IMR-90 (cell line): ENCODE measurements at regions of chr10 and their contacts with region 1.

Region 1: DNA sequence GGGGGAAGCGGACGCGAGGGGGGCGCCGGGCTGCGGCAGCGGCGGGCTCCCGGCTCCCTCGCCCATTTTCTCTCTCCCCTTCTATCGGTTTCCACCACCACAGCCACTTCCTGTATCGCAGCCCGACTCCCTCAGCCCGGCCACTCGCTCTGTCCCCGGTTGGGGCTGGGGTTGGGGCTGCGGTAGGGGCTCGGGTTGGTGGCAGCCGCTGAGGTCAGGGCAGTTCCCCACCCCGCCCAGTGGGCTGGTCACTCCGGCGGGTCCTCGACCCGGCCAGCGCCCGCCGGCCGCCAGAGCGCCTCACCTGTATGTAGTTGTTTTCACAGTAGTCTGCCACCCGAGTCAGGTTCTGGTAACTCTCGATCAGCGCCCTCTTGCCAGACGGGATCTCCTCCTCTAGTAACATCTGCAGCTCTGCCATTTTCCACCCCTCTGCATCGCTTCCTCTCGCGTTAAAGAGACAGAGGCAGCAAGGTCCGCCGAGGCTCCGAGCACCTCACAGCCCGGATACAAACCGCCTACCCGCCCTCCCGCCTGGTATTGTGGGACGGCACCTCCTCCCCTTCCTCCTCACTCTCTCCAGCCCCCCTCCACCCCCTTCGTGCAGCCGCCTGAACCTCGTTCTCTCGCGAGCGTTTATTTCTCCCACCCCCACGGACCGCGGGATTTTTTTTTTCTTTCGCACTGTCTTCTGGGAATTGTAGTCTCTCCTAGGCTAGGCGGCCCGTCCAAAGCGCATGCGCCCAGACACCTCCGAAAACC is at the start of gene ABI1:
- DNase-seq: peak; percentile 98
- ATAC-seq: peak; percentile 92
- H3K4me3 ChIP-seq: peak within 1 kb of the TSS; percentile 86
- H3K27ac ChIP-seq: peak within 1 kb of the TSS; percentile 83
- H3K4me1 ChIP-seq: 0 out of 2 replicates have a peak, but pooled peaks cover 2% of the 10 kb centered on the region
- H3K27me3 ChIP-seq: peaks cover 5% of the 10 kb centered on the region
- CTCF ChIP-seq: no peak
- POLR2A ChIP-seq: peak; percentile 86
- RAD21 ChIP-seq: no peak
- total RNA-seq, gene ABI1: 60.8 and 71.3 TPM in 2 replicates

Region 2: DNA sequence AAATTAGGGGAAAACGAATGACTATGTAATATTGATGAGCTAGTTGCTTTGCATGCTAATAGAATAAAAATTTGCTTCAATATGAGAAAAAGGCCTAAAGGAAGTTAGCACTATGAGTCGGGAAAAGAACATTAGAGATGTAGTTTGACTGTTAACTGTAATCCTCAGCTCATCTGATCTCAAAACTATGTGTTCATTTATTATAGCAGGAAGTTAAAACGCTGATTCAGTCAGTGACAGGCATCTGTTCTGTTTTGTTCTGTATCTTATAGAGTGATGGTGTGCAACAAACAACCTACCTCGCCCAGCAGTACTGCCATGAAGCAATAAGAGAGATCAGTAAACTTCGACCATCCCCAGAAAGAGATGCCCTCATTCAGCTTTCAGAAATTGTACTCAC is 114.6 kb before region 1 on chr10:
- CTCF ChIA-PET with region 1: no interaction called
- POLR2A ChIA-PET with region 1: no interaction called
- dilution Hi-C with region 1: no loop called
- in situ Hi-C with region 1: no loop called
- intact Hi-C with region 1: loop called (anchors 5 kb)
- DNase-seq: no peak
- ATAC-seq: no peak
- H3K4me3 ChIP-seq: no peak overlapping the region
- H3K27ac ChIP-seq: no peak overlapping the region
- H3K4me1 ChIP-seq: no peaks in the 10 kb centered on the region
- H3K27me3 ChIP-seq: no peaks in the 10 kb centered on the region
- CTCF ChIP-seq: no peak
- POLR2A ChIP-seq: no peak
- RAD21 ChIP-seq: no peak

Region 3: GRCh38 chr10:26765549-26765948 is 95.1 kb before region 1 on chr10:
- CTCF ChIA-PET with region 1: no interaction called
- POLR2A ChIA-PET with region 1: no interaction called
- dilution Hi-C with region 1: no loop called
- in situ Hi-C with region 1: no loop called
- intact Hi-C with region 1: loop called (anchors 5 kb)
- DNase-seq: peak; percentile 10
- ATAC-seq: no peak; the same call in 1 of the 2 replicates
- H3K4me3 ChIP-seq: no peak overlapping the region
- H3K27ac ChIP-seq: no peak overlapping the region
- H3K4me1 ChIP-seq: no peaks in the 10 kb centered on the region
- H3K27me3 ChIP-seq: no peaks in the 10 kb centered on the region
- CTCF ChIP-seq: no peak
- POLR2A ChIP-seq: no peak
- RAD21 ChIP-seq: no peak

Region 4: DNA sequence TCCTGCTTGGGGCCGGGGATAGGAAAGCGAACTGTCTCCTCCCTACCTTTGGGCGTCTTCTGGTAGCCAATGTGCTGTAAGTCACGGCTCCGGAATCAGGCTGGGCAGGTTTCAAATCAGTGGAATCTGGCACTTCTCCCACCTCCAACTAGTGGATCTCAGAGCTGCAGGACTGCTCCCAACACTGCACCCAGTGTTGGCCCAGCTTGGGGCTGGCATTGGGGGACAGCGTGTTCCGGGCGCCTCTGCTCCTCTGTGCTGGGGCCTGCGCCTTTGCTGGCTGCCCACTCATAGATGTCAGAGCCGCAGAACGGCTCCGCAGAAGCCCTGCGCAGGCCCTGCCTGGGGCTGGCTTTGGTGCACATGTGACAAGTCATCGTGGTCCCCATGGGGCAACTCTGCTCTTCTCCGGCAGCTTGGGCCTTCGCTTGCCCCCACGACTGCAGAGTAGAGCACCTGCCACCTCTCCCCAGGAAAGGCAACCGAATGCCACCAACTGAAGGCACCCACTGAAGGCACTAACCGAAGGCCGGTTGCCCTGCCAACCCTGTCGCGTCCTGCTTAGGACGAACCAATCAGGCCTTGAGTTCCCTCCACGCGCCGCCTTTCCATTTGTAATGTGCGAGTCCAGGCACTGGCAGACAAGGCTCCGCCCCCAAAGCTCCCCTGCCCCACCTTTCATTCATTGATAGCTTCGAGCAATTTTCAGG is 85.6 kb after region 1 on chr10:
- CTCF ChIA-PET with region 1: no interaction called
- POLR2A ChIA-PET with region 1: no interaction called
- dilution Hi-C with region 1: no loop called
- in situ Hi-C with region 1: no loop called
- intact Hi-C with region 1: no loop called
- DNase-seq: no peak
- ATAC-seq: peak; percentile 46
- H3K4me3 ChIP-seq: no peak overlapping the region
- H3K27ac ChIP-seq: no peak overlapping the region
- H3K4me1 ChIP-seq: no peaks in the 10 kb centered on the region; the same call in 1 of the 2 replicates
- H3K27me3 ChIP-seq: no peaks in the 10 kb centered on the region; the same call in 1 of the 2 replicates
- CTCF ChIP-seq: no peak
- POLR2A ChIP-seq: no peak
- RAD21 ChIP-seq: no peak